Activated naive CD4-positive, alpha-beta T cell treated with anti-CD3 and anti-CD28 coated beads for 36 hours (primary cell): ENCODE measurements at regions of chr20 and their contacts with region 1.

Region 1: DNA sequence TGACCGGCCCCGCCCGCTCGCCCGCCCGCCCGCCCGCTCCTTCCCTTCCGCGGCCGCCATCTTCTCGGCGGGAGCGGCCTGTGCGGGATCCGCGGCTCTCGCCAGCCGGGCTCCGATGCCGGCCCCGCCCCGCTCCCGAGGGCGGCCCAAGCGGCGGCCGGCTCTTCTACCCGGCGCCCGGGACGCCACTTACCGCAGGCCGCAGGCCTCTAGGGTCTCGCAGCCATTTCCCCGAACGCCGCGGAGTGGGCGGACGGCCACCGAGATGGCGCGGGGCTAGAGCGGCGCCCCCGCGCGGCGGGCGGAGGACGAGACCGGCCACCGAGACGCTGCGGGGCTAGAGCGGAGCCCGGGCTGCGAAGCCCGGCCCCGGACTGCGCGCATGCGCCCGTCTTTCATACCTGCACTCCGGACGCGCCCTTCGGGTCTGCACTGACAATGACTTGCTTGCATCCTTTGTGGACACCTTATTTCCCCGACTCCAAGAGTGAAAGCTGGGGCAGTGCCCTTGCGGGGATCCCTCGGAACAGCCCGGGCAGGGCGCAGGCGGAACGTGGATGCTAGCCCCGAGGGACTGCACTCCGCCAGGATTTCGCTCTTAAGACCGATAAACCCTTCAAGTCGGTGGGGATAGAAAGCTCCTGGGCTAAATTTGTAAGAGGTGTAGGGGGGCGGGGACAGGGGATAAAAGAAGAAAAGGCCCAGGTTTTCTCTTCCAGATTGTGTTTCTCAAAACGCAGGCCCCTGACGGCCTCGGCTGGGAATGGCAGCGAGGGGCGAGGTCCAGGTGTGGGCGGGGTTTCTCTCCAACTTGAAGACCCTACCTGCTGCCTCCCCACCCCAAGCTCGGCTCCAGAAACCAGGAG is at the start of gene DIDO1:
- DNase-seq: peak; percentile 91
- H3K4me3 Mint-ChIP-seq: peak within 1 kb of the TSS; percentile 86
- H3K27ac Mint-ChIP-seq: peak within 1 kb of the TSS; percentile 91
- H3K4me1 Mint-ChIP-seq: peaks cover 69% of the 10 kb centered on the region
- H3K27me3 Mint-ChIP-seq: no peaks in the 10 kb centered on the region
- total RNA-seq, gene DIDO1: 49.5 to 50.3 TPM

Region 2: DNA sequence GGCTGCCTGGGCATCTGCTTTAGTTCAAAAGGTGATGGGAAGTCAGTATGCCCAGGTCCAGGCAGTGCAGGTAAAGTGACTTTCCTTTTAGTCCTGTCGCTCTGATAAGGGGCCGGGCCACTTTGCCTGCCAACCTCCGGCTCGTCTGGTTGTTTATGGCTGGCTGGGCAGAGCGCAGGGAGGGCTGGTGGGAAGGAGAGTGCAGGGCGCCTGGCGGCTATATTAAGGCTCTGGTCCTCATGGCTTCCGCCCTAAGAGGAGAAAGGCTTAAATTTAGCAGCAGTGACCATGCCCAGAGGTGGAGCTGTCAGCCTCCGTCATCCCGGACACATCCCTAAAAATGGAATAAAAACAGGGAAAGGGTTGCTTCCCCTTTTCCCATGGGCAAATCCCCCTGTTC is 465.3 kb before region 1 on chr20:
- CTCF ChIA-PET with region 1: no interaction called
- intact Hi-C with region 1: no loop called
- DNase-seq: no peak
- H3K4me3 Mint-ChIP-seq: no peak overlapping the region
- H3K27ac Mint-ChIP-seq: no peak overlapping the region
- H3K4me1 Mint-ChIP-seq: no peaks in the 10 kb centered on the region
- H3K27me3 Mint-ChIP-seq: no peaks in the 10 kb centered on the region

Region 3: DNA sequence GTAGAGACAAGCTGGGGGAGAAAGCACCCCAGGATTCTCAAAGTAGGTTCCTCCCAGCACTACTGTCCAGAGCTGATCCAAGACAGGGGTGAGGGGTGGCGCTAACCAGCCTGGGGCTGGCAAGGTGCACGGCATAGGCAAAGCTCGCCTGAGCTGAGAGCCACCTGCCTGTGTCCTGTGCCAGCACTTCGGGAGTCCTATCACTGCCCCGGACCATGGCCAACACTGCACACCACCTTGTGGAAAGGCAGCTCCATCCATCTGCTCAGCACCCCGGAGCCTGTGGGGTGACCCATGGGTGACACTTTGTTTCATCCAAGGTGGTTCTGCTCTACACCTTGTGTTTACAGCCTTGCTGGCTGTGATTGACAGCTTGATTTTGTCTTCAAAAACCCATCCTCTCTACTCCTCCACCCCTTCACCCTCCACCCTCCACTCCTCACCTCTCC is 417.8 kb before region 1 on chr20:
- CTCF ChIA-PET with region 1: no interaction called
- intact Hi-C with region 1: no loop called
- DNase-seq: no peak
- H3K4me3 Mint-ChIP-seq: no peak overlapping the region
- H3K27ac Mint-ChIP-seq: no peak overlapping the region
- H3K4me1 Mint-ChIP-seq: peaks cover 6% of the 10 kb centered on the region
- H3K27me3 Mint-ChIP-seq: peaks cover 9% of the 10 kb centered on the region

Region 4: DNA sequence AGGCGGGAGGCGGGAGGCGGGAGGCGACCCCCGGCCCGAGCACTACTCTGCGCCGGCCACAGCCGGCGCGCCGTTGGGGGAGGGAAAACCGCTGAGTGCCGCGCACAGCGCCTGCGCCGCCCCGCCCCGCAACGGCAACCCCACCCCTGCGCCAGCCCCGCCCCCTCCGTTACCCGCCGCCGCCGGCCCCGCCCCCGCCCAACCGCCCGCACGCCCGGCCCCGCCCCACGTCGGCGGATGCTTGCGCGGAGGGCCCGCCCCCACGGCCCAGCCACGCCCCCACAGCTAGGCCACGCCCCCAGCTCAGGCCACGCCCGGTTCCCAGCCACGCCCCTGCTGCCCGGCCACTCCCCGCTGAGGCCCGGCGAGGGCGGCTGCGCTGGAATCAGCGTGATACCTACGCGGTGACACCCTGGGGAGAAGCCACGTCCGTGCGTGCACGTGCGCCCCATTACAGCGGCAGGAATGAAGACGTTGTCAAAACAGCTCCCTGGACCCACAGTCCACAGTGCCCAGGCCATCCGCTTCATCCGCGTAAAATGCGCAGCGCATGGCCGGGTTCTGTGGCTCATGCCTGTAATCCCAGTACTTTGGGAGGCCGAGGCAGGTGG is 64.6 kb before region 1 on chr20 and contains the start of gene TCFL5:
- CTCF ChIA-PET with region 1: no interaction called
- intact Hi-C with region 1: loop called (anchors 1 kb)
- DNase-seq: peak; percentile 92
- H3K4me3 Mint-ChIP-seq: peak within 1 kb of the TSS; percentile 65
- H3K27ac Mint-ChIP-seq: no peak within 1 kb of the TSS
- H3K4me1 Mint-ChIP-seq: peaks cover 24% of the 10 kb centered on the region
- H3K27me3 Mint-ChIP-seq: no peaks in the 10 kb centered on the region
- total RNA-seq, gene TCFL5: 5.4 to 5.5 TPM